Spleen (tissue), 13 donors: ENCODE measurements at regions of chrX and their contacts with region 1.

Region 1: GRCh38 chrX:56600141-56600540 is 36.7 kb downstream of the UBQLN2 start:
- DNase-seq: no peak
- H3K4me3 ChIP-seq: no peak overlapping the region
- H3K27ac ChIP-seq: no peak overlapping the region
- H3K4me1 ChIP-seq: no peaks in the 10 kb centered on the region
- H3K27me3 ChIP-seq: no peaks in the 10 kb centered on the region
- CTCF ChIP-seq: no peak
- POLR2A ChIP-seq: no peak

Region 2: GRCh38 chrX:56661193-56661592 is 61.1 kb after region 1 on chrX:
- intact Hi-C with region 1: loop called (anchors 10 kb)
- DNase-seq: no peak
- H3K4me3 ChIP-seq: no peak overlapping the region
- H3K27ac ChIP-seq: no peak overlapping the region
- H3K4me1 ChIP-seq: no peaks in the 10 kb centered on the region
- H3K27me3 ChIP-seq: no peaks in the 10 kb centered on the region
- CTCF ChIP-seq: no peak
- POLR2A ChIP-seq: no peak